ENCODE measurements at regions of chr1 and their contacts with region 1.

Region 1: GRCh38 chr1:171081314-171081753 is 9.4 kb upstream of the FMO3 start:
- DNase-seq: peak; percentile 47
- H3K4me3 ChIP-seq: no peak overlapping the region
- H3K27ac ChIP-seq: no peak overlapping the region
- H3K4me1 ChIP-seq: no peaks in the 10 kb centered on the region
- H3K27me3 ChIP-seq: peaks cover 6% of the 10 kb centered on the region; the same call in 1 of the 2 replicates

Region 2: GRCh38 chr1:171226747-171227370 is 145.5 kb after region 1 on chr1:
- in situ Hi-C with region 1: loop called (anchors 10 kb)
- DNase-seq: peak; percentile 79
- H3K4me3 ChIP-seq: no peak overlapping the region
- H3K27ac ChIP-seq: no peak overlapping the region
- H3K4me1 ChIP-seq: no peaks in the 10 kb centered on the region
- H3K27me3 ChIP-seq: peaks cover 4% of the 10 kb centered on the region; the same call in 1 of the 2 replicates

Region 3: GRCh38 chr1:171313835-171314320 is 232.5 kb after region 1 on chr1 and contains the start of gene FMO4:
- in situ Hi-C with region 1: loop called (anchors 10 kb)
- DNase-seq: peak; percentile 99
- H3K4me3 ChIP-seq: peak within 1 kb of the TSS; percentile 68
- H3K27ac ChIP-seq: peak within 1 kb of the TSS; percentile 50
- H3K4me1 ChIP-seq: peaks cover 5% of the 10 kb centered on the region; the same call in 1 of the 2 replicates
- H3K27me3 ChIP-seq: 0 out of 2 replicates have a peak, but pooled peaks cover 4% of the 10 kb centered on the region
- total RNA-seq, gene FMO4: 1.6 and 1.7 TPM in 2 replicates

Measured in GM23248 (cell line).